ENCODE measurements at regions of chr5 and their contacts with region 1.

Region 1: GRCh38 chr5:135191084-135191826 is 157.2 kb upstream of the PITX1 start:
- DNase-seq: peak; percentile 93
- H3K4me3 Mint-ChIP-seq: peak overlapping the region; percentile 81
- H3K27ac Mint-ChIP-seq: no peak overlapping the region
- H3K4me1 Mint-ChIP-seq: no peaks in the 10 kb centered on the region
- H3K27me3 Mint-ChIP-seq: peaks cover 70% of the 10 kb centered on the region

Region 2: GRCh38 chr5:134917070-134917815 is 274.0 kb before region 1 on chr5:
- intact Hi-C with region 1: loop called (anchors 2 kb)
- DNase-seq: no peak
- H3K4me3 Mint-ChIP-seq: no peak overlapping the region
- H3K27ac Mint-ChIP-seq: peak overlapping the region; percentile 31
- H3K4me1 Mint-ChIP-seq: peaks cover 30% of the 10 kb centered on the region
- H3K27me3 Mint-ChIP-seq: no peaks in the 10 kb centered on the region

Region 3: DNA sequence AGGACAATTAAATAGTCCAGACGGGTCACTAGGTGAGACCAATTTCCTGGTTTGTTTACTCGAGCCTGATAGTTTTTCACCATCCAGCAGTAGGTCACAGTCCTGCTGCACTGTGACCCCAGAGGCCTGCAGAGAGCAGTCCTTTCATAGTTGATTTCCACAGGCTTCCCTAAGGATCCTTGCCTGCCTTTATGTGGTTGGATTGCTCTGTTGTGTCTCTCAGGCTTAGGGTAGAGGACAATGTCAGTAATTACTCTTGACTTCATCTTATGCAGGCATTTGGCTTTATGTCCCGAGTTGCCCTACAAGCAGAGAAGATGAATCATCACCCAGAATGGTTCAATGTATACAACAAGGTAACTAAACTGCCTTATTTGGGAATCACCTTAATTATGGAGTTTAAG is 232.5 kb before region 1 on chr5:
- intact Hi-C with region 1: no loop called
- DNase-seq: no peak
- H3K4me3 Mint-ChIP-seq: no peak overlapping the region
- H3K27ac Mint-ChIP-seq: no peak overlapping the region
- H3K4me1 Mint-ChIP-seq: peaks cover 4% of the 10 kb centered on the region
- H3K27me3 Mint-ChIP-seq: no peaks in the 10 kb centered on the region

Region 4: GRCh38 chr5:135039271-135040045 is 151.8 kb before region 1 on chr5:
- intact Hi-C with region 1: loop called (anchors 5 kb)
- DNase-seq: peak; percentile 66
- H3K4me3 Mint-ChIP-seq: no peak overlapping the region
- H3K27ac Mint-ChIP-seq: no peak overlapping the region
- H3K4me1 Mint-ChIP-seq: peaks cover 2% of the 10 kb centered on the region
- H3K27me3 Mint-ChIP-seq: peaks cover 85% of the 10 kb centered on the region

Region 5: GRCh38 chr5:135072387-135073281 is 118.6 kb before region 1 on chr5:
- intact Hi-C with region 1: no loop called
- DNase-seq: no peak
- H3K4me3 Mint-ChIP-seq: no peak overlapping the region
- H3K27ac Mint-ChIP-seq: no peak overlapping the region
- H3K4me1 Mint-ChIP-seq: no peaks in the 10 kb centered on the region
- H3K27me3 Mint-ChIP-seq: peaks cover 7% of the 10 kb centered on the region

Region 6: DNA sequence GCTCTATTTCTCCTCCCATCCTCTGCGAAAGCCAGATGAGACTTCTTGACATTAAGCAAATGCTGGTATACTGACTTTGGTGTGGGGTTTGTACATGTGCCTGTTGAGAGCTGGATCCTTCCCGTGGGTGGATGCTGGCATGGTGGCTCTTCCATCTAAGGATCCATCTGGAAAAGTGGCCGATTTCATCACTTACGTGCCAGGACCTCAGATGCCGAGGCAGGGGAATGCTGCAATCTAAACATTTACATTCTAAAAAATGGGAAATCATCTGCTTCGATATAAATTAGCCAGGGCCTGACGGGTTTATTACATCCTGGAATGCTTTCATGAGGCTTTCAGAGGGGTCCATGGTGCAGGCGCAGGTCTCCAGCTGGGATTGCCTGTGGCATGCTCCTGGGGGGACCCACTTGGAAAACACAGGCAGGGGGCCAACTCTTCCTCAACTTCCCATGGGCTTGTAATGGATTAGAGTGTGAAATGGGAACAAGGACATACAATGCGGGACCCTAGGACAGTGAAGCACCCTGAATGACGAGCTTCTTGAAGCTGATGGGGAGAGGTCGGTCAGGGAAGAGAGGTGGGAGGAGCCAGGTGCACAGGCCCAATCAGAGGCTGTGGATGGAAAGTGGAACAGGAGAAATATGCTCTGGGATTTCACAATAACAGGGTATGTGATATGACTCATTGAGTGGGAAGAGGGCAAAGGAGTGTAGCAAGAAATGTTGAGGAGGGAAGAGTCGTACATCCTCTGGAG is 51.7 kb before region 1 on chr5:
- intact Hi-C with region 1: no loop called
- DNase-seq: no peak
- H3K4me3 Mint-ChIP-seq: no peak overlapping the region
- H3K27ac Mint-ChIP-seq: no peak overlapping the region
- H3K4me1 Mint-ChIP-seq: no peaks in the 10 kb centered on the region
- H3K27me3 Mint-ChIP-seq: peaks cover 4% of the 10 kb centered on the region

Region 7: DNA sequence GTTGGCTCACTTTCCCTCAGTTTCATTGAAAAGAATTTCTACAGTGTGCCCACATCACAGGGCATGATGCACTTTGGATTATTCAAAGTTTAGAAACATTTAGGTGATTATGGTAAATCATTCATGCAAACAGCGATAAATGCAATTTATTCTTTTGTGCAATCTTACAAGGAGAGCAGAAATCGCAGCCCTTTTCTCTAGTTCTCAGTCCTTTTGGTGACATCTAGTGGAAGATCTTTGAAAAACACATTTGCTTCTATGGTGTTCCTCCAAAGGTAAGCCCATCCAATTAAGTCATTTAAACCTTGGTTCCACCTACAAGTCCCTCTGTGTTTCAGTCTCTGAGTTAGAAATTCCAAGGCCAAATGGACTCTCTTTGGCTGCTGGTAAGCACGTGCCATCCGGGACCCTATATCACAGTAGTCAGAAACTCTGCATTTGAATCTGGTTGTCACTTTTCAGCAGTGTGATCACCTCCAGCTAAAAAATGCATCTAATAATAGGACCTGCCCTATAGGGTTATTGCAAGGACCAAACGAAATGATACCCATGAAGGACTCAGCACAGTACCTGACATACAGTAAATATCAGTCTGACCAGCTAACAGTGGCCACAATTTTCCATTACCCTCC is 141.4 kb after region 1 on chr5:
- intact Hi-C with region 1: loop called (anchors 5 kb)
- DNase-seq: peak; percentile 70
- H3K4me3 Mint-ChIP-seq: no peak overlapping the region
- H3K27ac Mint-ChIP-seq: no peak overlapping the region
- H3K4me1 Mint-ChIP-seq: peaks cover 12% of the 10 kb centered on the region
- H3K27me3 Mint-ChIP-seq: no peaks in the 10 kb centered on the region